ENCODE measurements at regions of chr4 and their contacts with region 1.

Region 1: GRCh38 chr4:150305995-150306394 is 227.8 kb downstream of the DCLK2 start:
- DNase-seq: peak; percentile 80
- H3K4me3 ChIP-seq: no peak overlapping the region
- H3K27ac ChIP-seq: peak overlapping the region; percentile 78
- H3K4me1 ChIP-seq: peaks cover 62% of the 10 kb centered on the region
- H3K27me3 ChIP-seq: no peaks in the 10 kb centered on the region
- CTCF ChIP-seq: no peak
- POLR2A ChIP-seq: no peak

Region 2: DNA sequence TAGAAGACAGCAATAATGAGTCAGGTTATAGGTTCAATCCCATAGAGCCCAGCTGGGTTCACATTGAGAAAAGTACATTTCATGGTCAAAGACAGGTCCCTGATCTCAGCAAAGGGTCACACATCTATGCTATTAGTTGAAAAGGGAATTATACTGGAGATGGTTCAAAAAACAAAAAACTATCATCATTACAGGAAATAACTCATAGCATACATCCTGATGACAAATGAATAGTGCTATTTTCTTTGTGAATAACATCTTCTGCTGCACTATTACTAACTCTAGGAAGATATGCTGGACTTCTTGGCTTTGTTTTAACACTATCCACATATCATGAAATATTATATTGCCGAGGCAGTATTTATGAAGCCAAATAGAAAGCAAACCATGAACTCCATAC is 73.5 kb after region 1 on chr4:
- CTCF ChIA-PET with region 1: no interaction called
- POLR2A ChIA-PET with region 1: no interaction called
- dilution Hi-C with region 1: no loop called
- intact Hi-C with region 1: loop called (anchors 5 kb)
- DNase-seq: peak; percentile 76
- H3K4me3 ChIP-seq: no peak overlapping the region
- H3K27ac ChIP-seq: peak overlapping the region; percentile 15
- H3K4me1 ChIP-seq: peaks cover 9% of the 10 kb centered on the region
- H3K27me3 ChIP-seq: no peaks in the 10 kb centered on the region
- CTCF ChIP-seq: no peak
- POLR2A ChIP-seq: no peak

Region 3: GRCh38 chr4:150479657-150480056 is 173.7 kb after region 1 on chr4:
- CTCF ChIA-PET with region 1: no interaction called
- POLR2A ChIA-PET with region 1: no interaction called
- dilution Hi-C with region 1: no loop called
- intact Hi-C with region 1: loop called (anchors 5 kb)
- DNase-seq: no peak
- H3K4me3 ChIP-seq: no peak overlapping the region
- H3K27ac ChIP-seq: no peak overlapping the region
- H3K4me1 ChIP-seq: peaks cover 20% of the 10 kb centered on the region
- H3K27me3 ChIP-seq: no peaks in the 10 kb centered on the region
- CTCF ChIP-seq: no peak
- POLR2A ChIP-seq: no peak

Region 4: DNA sequence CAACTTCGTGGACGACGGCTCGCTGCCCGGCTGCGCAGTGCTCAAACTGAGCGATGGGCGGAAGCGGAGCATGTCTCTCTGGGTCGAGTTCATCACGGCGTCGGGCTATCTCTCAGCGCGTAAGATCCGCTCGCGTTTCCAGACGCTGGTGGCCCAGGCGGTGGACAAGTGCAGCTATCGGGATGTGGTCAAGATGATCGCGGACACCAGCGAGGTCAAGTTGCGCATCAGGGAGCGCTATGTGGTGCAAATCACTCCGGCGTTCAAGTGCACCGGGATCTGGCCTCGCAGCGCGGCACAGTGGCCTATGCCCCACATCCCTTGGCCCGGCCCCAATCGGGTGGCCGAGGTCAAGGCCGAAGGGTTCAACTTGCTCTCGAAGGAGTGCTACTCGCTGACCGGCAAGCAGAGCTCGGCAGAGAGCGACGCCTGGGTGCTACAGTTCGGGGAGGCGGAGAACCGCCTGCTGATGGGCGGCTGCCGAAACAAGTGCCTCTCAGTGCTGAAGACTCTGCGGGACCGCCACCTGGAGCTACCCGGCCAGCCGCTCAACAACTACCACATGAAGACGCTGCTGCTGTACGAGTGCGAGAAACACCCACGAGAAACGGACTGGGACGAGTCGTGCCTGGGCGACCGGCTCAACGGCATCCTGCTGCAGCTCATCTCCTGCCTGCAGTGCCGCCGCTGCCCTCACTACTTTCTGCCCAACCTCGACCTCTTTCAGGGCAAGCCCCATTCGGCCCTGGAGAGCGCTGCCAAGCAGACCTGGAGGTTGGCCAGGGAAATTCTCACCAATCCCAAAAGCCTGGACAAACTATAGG is 277.5 kb after region 1 on chr4:
- CTCF ChIA-PET with region 1: no interaction called
- POLR2A ChIA-PET with region 1: no interaction called
- dilution Hi-C with region 1: no loop called
- intact Hi-C with region 1: loop called (anchors 5 kb)
- DNase-seq: peak; percentile 26
- H3K4me3 ChIP-seq: peak overlapping the region in 2 of 3 experiments; percentile 20 to 42
- H3K27ac ChIP-seq: no peak overlapping the region
- H3K4me1 ChIP-seq: no peaks in the 10 kb centered on the region
- H3K27me3 ChIP-seq: no peaks in the 10 kb centered on the region
- CTCF ChIP-seq: no peak
- POLR2A ChIP-seq: no peak

Measured in endothelial cell of umbilical vein (primary cell).